Activated CD4-positive, alpha-beta T cell treated with anti-CD3 and anti-CD28 coated beads, Interleukin-2, amount 10 ng/mL, durations not matched to agents 24 days and 14 days (primary cell): ENCODE measurements at regions of chr1 and their contacts with region 1.

Region 1: DNA sequence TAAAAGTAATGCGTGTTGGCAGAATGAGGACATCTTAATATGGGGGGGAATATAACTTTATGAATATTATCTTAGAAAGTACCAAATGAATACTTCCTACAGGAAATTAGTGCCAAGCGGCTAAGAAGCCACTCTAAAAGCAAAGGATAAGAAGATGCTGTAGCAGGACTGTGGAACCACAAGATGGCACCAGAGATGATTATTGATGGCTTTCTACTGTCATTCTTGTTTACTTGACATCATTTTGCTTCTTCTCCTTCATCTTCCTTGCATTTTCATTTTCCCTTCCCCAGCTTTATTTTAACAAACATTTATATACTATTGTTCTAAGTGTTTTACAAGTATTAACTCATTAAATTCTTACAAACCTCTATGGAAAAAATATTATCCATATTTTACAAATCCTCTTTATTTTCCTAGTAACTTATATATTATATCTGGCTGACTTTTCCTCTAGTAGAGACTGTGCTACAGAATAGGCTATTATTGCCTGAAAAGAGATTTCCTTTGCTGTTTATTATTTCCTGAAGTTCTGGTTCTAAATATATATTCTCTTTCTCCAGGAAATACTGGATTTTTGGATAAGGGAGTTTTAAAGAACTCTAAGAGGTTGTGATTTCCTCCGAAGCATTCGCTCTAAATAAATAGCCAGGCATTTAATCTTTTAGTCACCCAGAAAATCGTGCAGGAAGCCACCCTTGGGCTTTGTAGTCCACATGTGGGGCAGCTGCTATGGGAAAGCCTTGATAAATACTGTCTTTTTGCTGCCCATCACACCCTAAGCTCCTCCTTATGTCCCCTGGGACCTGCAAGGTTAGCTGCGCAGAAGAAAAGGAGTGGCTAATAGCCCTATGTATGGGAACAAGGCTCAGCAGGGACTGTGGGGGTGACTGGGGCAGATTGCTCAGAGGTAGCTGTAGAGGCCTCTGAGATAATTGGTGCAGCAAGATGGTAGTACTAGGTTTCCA is 69.8 kb downstream of the TPR start:
- DNase-seq: peak; percentile 79
- H3K4me3 Mint-ChIP-seq: peak overlapping the region; percentile 11
- H3K27ac Mint-ChIP-seq: peak overlapping the region; percentile 91
- H3K4me1 Mint-ChIP-seq: peaks cover 48% of the 10 kb centered on the region
- H3K27me3 Mint-ChIP-seq: no peaks in the 10 kb centered on the region

Region 2: DNA sequence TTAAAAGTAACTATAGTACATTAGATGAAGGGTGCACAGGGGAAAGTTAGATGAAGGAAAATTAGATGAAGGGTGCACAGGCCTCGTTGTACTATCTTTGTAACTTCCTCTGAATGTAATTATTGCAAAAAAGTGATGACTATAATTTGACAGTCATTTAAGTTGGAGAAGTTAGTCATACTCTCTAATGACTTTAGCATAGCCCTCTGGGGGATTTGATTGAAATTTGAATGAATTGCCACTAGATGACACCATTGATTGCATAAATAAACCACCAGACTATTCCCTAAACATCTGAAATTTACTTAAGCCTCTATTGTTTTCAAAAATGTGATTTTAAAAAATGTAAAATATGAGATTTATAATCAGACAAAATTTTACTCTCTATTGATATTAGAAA is 32.8 kb before region 1 on chr1:
- intact Hi-C with region 1: loop called (anchors 2 kb)
- DNase-seq: no peak
- H3K4me3 Mint-ChIP-seq: no peak overlapping the region
- H3K27ac Mint-ChIP-seq: no peak overlapping the region
- H3K4me1 Mint-ChIP-seq: peaks cover 9% of the 10 kb centered on the region
- H3K27me3 Mint-ChIP-seq: no peaks in the 10 kb centered on the region

Region 3: DNA sequence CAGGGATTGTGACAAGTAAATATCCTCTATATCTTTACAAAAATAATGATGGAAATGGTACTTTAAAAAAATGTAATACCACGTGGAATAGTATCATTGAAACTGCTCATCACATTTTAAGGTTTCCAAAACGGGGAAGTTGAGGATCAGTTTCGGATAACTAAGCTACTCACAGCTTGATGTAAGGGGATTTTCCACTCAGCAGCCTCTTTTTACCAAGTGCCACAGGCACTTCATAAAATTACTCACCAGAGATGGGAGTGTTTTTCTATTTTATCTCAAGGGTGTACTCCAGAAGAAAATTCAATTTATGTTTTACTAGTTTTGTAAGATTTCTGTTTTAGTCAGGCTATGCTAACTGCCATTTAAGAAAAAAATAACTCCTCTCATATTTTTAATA is 21.9 kb before region 1 on chr1:
- intact Hi-C with region 1: loop called (anchors 2 kb)
- DNase-seq: peak; percentile 65
- H3K4me3 Mint-ChIP-seq: peak overlapping the region; percentile 55
- H3K27ac Mint-ChIP-seq: peak overlapping the region; percentile 83
- H3K4me1 Mint-ChIP-seq: peaks cover 45% of the 10 kb centered on the region
- H3K27me3 Mint-ChIP-seq: no peaks in the 10 kb centered on the region

Region 4: DNA sequence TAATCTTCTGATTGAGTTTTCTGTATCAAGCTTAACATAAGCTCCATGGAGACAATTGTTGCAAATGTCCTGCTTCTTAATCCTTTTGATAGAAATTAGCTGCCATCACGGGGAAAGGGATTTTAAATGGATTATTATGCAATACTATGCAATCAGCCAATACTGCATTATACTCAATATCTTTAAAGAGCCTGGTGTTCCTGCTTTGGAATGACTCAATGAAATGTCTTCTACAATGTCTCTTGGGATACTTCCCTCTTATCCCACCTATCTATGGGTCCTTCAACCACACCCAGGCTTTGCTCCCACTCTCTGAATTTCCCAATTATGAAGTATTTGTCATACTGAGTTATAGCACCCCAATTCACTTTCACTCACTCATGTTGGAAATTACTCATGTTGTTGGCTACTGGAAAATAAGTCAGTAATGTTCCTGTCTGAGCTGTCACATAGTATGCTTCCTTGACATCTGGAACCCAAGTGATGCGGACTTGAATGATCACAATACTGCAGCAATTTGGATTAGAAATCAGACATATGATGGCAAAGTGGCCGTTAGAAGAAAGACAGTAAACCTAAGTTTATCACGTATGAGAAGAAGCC is 15.2 kb before region 1 on chr1:
- intact Hi-C with region 1: loop called (anchors 1 kb)
- DNase-seq: no peak
- H3K4me3 Mint-ChIP-seq: peak overlapping the region; percentile 61
- H3K27ac Mint-ChIP-seq: peak overlapping the region; percentile 90
- H3K4me1 Mint-ChIP-seq: peaks cover 57% of the 10 kb centered on the region
- H3K27me3 Mint-ChIP-seq: no peaks in the 10 kb centered on the region

Region 5: GRCh38 chr1:186325239-186325638 is 20.0 kb after region 1 on chr1:
- intact Hi-C with region 1: loop called (anchors 1 kb)
- DNase-seq: peak; percentile 73
- H3K4me3 Mint-ChIP-seq: no peak overlapping the region
- H3K27ac Mint-ChIP-seq: no peak overlapping the region
- H3K4me1 Mint-ChIP-seq: peaks cover 29% of the 10 kb centered on the region
- H3K27me3 Mint-ChIP-seq: no peaks in the 10 kb centered on the region

Region 6: DNA sequence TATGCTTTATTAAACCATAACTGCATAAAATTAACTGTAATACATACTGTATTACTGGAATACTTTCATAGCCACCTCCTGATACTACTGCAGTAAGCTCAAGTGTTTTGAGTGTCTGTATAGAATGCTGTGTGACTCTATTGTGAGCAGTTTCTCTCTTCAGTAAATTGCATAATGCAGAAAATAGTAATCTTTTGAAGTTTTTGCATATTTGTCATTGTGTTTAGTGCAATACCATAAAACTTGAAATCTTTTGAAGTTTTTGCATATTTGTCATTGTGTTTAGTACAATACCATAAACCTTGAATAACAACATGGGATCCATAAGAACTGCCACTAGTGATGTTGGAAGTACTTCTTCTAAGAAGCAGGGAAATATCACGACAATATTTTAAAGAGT is 58.6 kb after region 1 on chr1:
- intact Hi-C with region 1: no loop called
- DNase-seq: no peak
- H3K4me3 Mint-ChIP-seq: no peak overlapping the region
- H3K27ac Mint-ChIP-seq: no peak overlapping the region
- H3K4me1 Mint-ChIP-seq: peaks cover 9% of the 10 kb centered on the region
- H3K27me3 Mint-ChIP-seq: no peaks in the 10 kb centered on the region

Region 7: DNA sequence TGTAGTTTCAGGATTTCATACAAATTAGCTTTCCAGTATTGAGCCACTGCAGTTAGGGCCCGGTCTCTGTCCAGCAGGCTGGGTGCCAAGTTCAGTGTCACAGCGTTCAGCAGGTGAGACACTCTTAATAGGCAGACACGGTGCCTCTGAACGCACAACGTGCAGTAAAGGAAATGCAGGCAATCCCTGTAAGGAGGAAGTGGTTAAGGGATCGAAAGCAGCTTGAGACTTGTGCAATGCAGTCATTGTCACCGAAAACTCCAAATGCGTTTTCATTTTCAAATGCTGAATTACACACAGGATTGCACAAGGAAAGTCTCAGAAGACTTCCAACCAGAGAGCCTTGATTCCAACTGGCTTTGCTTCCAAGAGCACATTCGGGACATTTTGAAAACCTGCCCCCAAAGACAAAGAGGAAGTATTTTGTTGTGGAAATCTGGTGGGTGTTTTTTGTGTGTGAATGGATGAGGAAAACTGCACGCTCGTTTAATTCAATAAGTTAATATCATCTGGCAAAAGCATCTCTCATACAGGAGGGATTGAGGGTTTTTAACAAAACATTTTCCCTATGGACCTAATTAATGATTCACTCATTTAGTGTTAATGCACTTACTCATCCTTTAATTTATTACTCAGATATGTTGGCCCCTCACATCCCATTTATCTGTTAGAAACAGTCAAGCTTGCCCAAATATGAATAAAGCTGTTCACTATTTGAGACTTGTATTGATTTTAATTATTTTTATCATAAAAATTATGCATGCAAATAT is 313.3 kb after region 1 on chr1:
- intact Hi-C with region 1: loop called (anchors 5 kb)
- DNase-seq: peak; percentile 88
- H3K4me3 Mint-ChIP-seq: peak overlapping the region; percentile 77
- H3K27ac Mint-ChIP-seq: no peak overlapping the region
- H3K4me1 Mint-ChIP-seq: peaks cover 37% of the 10 kb centered on the region
- H3K27me3 Mint-ChIP-seq: peaks cover 18% of the 10 kb centered on the region